PC-9 (cell line): ENCODE measurements at regions of chr17 and their contacts with region 1.

Region 1: DNA sequence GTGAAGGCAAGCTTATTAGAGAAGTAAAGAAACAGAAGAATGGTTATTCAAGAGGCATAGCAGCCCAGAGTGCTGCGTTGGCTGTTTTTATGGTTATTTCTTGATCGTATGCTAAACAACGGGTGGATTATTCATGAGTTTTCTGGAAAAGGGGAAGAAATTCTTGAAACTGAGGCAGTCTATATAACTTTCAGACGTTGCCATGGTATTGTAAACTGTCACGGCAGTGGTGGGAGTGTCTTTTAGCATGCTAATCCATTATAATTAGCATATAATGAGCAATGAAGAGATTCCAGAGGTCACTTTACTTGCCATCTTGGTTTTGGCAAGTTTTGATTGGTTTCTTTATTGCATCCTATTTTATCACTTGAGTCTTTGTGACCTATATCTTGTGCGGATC is 17.4 kb upstream of the MILR1 start:
- DNase-seq: no peak
- H3K4me3 ChIP-seq: no peak overlapping the region
- H3K27ac ChIP-seq: no peak overlapping the region
- H3K4me1 ChIP-seq: no peaks in the 10 kb centered on the region
- H3K27me3 ChIP-seq: no peaks in the 10 kb centered on the region
- CTCF ChIP-seq: no peak

Region 2: DNA sequence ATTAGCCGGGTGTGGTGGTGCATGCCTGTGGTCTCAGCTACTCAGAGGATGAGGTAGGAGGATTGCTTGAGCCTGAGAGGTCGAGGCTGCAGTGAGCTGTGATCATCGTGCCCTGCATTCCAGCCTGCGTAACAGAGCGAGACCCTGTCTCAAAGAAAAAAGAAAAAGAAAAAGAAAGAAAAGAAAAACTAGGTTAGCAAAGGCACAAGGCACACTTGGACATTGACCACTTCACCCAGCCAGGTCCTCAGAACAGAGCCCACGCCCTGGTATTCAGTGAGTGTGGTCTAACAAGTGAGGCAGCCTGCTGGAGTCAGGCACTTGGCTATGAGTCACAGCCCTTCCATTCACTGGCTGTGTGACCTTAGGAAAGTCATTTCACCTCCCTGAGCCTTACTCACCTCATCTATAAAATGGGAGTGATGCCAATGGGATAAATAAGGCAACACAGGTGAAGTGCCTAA is 27.8 kb after region 1 on chr17:
- CTCF ChIA-PET with region 1: no interaction called
- POLR2A ChIA-PET with region 1: interaction called, 10 read pairs
- intact Hi-C with region 1: no loop called
- DNase-seq: peak; percentile 34 to 66
- H3K4me3 ChIP-seq: no peak overlapping the region
- H3K27ac ChIP-seq: peak overlapping the region; percentile 56
- H3K4me1 ChIP-seq: peaks cover 13% of the 10 kb centered on the region
- H3K27me3 ChIP-seq: no peaks in the 10 kb centered on the region
- CTCF ChIP-seq: no peak